ENCODE measurements at regions of chr1 and their contacts with region 1.

Region 1: DNA sequence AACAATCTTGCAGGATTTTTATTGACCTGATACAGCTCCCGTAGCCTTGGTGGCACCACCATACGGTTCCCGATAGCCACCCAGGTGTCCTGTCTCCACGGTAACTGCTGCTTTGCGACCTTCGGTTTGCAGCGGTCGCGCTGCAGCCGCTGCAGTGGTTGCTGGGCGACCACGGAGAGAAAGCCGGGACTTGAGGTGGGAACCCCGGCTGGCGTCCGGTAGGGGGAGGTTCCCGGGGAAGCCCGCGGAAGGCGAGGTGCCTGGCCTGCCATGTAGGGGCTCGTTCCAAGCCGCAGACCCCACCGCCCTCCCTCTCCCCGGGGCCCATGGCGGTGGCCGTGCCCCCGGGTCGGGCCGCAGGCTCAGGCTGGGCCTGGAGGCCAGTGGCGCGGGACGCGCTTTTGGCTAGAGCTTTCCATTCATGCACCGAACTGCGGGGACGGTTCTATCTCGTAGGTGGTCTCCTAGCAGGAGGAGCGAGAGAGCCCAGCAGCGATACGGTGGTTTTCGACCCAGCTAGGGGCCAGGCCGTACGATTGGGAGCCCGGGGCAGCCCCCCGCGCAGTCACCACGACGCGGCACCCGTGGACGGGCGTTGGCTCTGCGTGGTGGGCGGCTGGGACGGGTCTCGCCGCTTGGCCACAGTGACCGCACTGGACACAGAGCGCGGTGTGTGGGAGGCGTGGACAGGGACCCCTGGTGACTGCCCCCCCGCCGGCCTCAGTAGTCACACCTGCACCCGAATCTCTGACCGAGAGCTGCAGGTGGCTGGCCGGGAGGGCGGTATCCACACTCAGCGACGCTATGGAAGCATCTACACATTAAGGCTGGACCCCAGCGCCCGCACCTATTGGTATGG is at the start of gene KLHDC9:
- DNase-seq: peak; percentile 70 to 77
- ATAC-seq: peak; percentile 72 to 94 (median 84)
- H3K4me3 ChIP-seq: peak within 1 kb of the TSS; percentile 15 to 77 (median 60)
- H3K27ac ChIP-seq: peak within 1 kb of the TSS in 9 of 10 donors; percentile 39 to 74 (median 67)
- H3K4me1 ChIP-seq: peaks cover 7 to 43% (median 22%) of the 10 kb centered on the region in 9 donors
- H3K27me3 ChIP-seq: no peaks in the 10 kb centered on the region
- CTCF ChIP-seq: peak in 2 of 9 donors; percentile 4 to 8
- total RNA-seq, gene KLHDC9: 2.2 to 17.7 (median 9.0) TPM

Region 2: GRCh38 chr1:160726498-160727315 is 371.7 kb before region 1 on chr1:
- intact Hi-C with region 1: loop called in 1 of 10 experiments (anchors 5 kb)
- DNase-seq: peak in 1 of 2 donors; percentile 50
- ATAC-seq: peak in 7 of 8 donors; percentile 55 to 90 (median 72)
- H3K4me3 ChIP-seq: no peak overlapping the region
- H3K27ac ChIP-seq: peak overlapping the region in 1 of 10 donors; percentile 45
- H3K4me1 ChIP-seq: peaks cover 0 to 30% (median 0%) of the 10 kb centered on the region in 9 donors
- H3K27me3 ChIP-seq: peaks cover 0 to 14% (median 0%) of the 10 kb centered on the region in 7 donors
- CTCF ChIP-seq: peak; percentile 48 to 88 (median 73)

Region 3: GRCh38 chr1:160830321-160831153 is 267.9 kb before region 1 on chr1:
- intact Hi-C with region 1: loop called in 4 of 10 experiments (anchors 2 to 10 kb)
- DNase-seq: peak; percentile 21 to 39
- ATAC-seq: peak in 2 of 8 donors; percentile 27 to 31
- H3K4me3 ChIP-seq: no peak overlapping the region
- H3K27ac ChIP-seq: no peak overlapping the region
- H3K4me1 ChIP-seq: no peaks in the 10 kb centered on the region
- H3K27me3 ChIP-seq: peaks cover 0 to 20% (median 0%) of the 10 kb centered on the region in 7 donors
- CTCF ChIP-seq: peak in 7 of 9 donors; percentile 33 to 62 (median 53)

Region 4: DNA sequence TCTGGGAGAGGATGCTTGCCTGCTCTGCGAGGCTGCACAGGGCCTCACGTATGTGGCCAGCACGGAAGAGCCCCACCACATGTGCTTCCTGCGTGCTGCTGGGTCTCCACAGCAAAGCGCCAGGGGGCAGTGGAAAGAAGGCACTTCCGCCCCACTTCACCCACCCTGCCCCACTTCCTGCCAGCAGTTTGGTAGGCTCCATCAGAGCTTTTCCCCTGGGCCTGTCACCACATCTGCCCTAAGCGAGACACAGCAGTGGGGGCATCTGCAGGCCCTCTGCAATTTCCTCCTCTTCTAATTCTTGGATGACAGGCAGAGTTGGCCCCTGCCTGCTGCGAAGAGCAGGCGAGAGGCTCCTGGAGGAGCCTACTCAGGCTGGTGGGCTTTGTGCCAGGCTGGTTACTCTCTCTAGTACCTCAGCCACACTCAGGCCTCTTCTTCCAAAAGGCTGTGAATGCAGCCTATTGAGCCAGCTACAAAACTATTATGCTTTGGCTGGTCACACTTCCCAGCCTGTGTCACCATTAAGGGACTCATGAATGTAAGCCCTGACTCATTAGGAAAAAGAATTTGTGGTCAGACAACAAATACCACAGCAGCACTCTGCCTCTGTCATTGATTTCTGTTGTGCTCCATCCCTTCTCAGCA is 260.8 kb before region 1 on chr1:
- intact Hi-C with region 1: loop called in 4 of 10 experiments (anchors 2 to 10 kb)
- DNase-seq: peak in 1 of 2 donors; percentile 40
- ATAC-seq: peak in 7 of 8 donors; percentile 58 to 70 (median 64)
- H3K4me3 ChIP-seq: no peak overlapping the region
- H3K27ac ChIP-seq: peak overlapping the region in 2 of 10 donors; percentile 37 to 73
- H3K4me1 ChIP-seq: peaks cover 0 to 44% (median 3%) of the 10 kb centered on the region in 9 donors
- H3K27me3 ChIP-seq: peaks cover 0 to 14% (median 0%) of the 10 kb centered on the region in 7 donors
- CTCF ChIP-seq: peak in 3 of 9 donors; percentile 11 to 33 (median 13)

Region 5: DNA sequence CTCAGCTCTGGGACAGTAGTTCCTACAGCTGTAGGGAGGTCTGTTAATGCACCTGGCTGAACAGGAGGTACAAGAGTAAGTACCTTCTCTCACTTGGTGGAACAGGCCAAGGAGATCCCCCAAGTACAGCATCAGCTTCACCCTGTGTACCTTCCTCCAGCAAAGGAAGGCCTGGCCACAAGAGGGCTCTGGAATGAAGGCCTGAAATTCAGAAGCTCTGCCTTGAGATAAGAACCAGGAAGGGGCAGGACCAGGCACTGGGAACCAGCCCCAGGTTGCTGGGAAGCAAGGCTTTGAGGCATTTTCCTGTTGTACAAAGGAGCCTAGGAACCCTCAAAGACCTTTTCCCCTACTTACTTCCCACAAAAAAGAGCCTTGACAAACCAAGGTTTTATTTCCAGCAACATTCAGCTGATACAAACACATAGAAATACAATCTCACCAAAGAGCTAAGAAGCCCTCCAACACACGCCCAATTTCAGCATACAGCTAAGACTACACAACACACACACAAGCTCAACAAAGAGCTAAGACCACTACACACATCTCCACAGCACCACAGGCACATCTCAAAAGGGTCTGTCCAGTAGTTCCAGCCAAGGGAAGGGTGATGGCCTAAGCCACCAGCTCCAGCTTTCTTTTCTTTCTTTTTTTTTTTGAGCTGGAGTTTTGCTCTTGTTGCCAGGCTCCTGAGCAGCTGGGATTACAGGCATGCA is 101.0 kb before region 1 on chr1:
- intact Hi-C with region 1: loop called in 9 of 10 experiments (anchors 1 to 5 kb)
- DNase-seq: peak; percentile 45 to 83
- ATAC-seq: peak; percentile 89 to 95 (median 92)
- H3K4me3 ChIP-seq: no peak overlapping the region
- H3K27ac ChIP-seq: peak overlapping the region in 9 of 10 donors; percentile 47 to 82 (median 75)
- H3K4me1 ChIP-seq: peaks cover 0 to 30% (median 12%) of the 10 kb centered on the region in 9 donors
- H3K27me3 ChIP-seq: no peaks in the 10 kb centered on the region
- CTCF ChIP-seq: peak; percentile 43 to 83 (median 68)

Region 6: DNA sequence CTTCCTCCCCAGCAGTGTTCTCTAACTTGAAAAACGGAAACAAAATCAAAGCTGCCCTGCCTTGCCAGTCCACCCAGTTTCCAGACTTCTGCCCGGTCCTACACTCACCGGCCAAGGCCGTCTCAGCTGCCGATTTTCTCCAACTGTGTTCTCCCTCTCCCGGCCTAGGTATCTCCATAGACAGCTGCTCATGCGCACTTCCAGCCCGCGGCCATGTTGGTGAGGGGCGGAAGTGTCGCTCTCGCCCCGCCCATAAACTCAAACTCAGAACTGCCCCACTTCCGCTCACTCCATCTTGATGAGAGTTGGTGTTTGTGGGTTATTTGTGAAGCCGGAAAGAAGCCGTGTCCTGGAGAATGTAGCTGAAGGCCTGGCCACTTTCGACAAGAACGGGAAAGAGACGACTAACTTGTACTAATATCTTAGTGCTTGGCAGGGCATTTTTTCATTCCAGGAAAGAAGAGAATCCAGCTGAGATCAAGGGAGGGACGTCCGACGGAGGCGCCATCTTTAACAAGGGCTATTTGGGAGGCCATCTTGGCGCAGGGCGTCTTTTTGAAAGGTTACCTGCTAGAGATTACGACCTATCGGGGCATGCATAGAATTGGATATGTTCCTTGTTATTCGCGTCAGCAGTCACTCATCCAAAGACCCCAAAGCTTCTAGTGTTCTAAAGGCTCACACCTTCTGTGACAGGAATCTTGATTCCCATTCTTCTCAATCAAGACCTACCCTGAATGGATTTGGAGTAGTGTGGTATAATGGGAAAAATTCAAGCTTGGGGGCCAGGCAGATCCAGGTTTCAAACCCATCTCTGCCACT is 52.5 kb before region 1 on chr1 and contains the start of gene USF1:
- intact Hi-C with region 1: loop called in 4 of 10 experiments (anchors 2 to 5 kb)
- DNase-seq: peak; percentile 90 to 94
- ATAC-seq: peak; percentile 97 to 98 (median 98)
- H3K4me3 ChIP-seq: peak within 1 kb of the TSS; percentile 65 to 98 (median 86)
- H3K27ac ChIP-seq: peak within 1 kb of the TSS; percentile 86 to 98 (median 95)
- H3K4me1 ChIP-seq: peaks cover 0 to 53% (median 17%) of the 10 kb centered on the region in 9 donors
- H3K27me3 ChIP-seq: no peaks in the 10 kb centered on the region
- CTCF ChIP-seq: no peak
- total RNA-seq, gene USF1: 23.7 to 43.6 (median 28.5) TPM

Region 7: GRCh38 chr1:161132410-161133219 is 34.2 kb after region 1 on chr1 and contains the start of gene DEDD:
- intact Hi-C with region 1: loop called in 1 of 10 experiments (anchors 2 kb)
- DNase-seq: peak; percentile 90 to 97
- ATAC-seq: peak; percentile 95 to 97 (median 96)
- H3K4me3 ChIP-seq: peak within 1 kb of the TSS; percentile 55 to 85 (median 74)
- H3K27ac ChIP-seq: peak within 1 kb of the TSS; percentile 89 to 99 (median 96)
- H3K4me1 ChIP-seq: peaks cover 4 to 63% (median 45%) of the 10 kb centered on the region in 9 donors
- H3K27me3 ChIP-seq: no peaks in the 10 kb centered on the region
- CTCF ChIP-seq: peak in 2 of 9 donors; percentile 18 to 39
- total RNA-seq, gene DEDD: 21.7 to 33.0 (median 26.3) TPM

Region 8: GRCh38 chr1:161165742-161166668 is 67.6 kb after region 1 on chr1 and contains the start of gene PPOX:
- intact Hi-C with region 1: no loop called
- DNase-seq: peak; percentile 93 to 97
- ATAC-seq: peak; percentile 94 to 97 (median 96)
- H3K4me3 ChIP-seq: peak within 1 kb of the TSS; percentile 62 to 92 (median 78)
- H3K27ac ChIP-seq: peak within 1 kb of the TSS; percentile 86 to 94 (median 88)
- H3K4me1 ChIP-seq: peaks cover 10 to 41% (median 31%) of the 10 kb centered on the region in 9 donors
- H3K27me3 ChIP-seq: no peaks in the 10 kb centered on the region
- CTCF ChIP-seq: peak in 8 of 9 donors; percentile 6 to 62 (median 45)
- total RNA-seq, gene PPOX: 8.5 to 19.8 (median 15.0) TPM

Region 9: GRCh38 chr1:161201828-161202725 is 103.6 kb after region 1 on chr1 and contains the start of gene NDUFS2:
- intact Hi-C with region 1: no loop called
- DNase-seq: peak; percentile 95 to 99
- ATAC-seq: peak; percentile 79 to 91 (median 88)
- H3K4me3 ChIP-seq: peak within 1 kb of the TSS; percentile 72 to 94 (median 85)
- H3K27ac ChIP-seq: peak within 1 kb of the TSS; percentile 93 to 100 (median 98)
- H3K4me1 ChIP-seq: peaks cover 48 to 92% (median 85%) of the 10 kb centered on the region in 9 donors
- H3K27me3 ChIP-seq: no peaks in the 10 kb centered on the region
- CTCF ChIP-seq: peak in 2 of 9 donors; percentile 10 to 21
- total RNA-seq, gene NDUFS2: 244 to 370 (median 318) TPM

Region 10: DNA sequence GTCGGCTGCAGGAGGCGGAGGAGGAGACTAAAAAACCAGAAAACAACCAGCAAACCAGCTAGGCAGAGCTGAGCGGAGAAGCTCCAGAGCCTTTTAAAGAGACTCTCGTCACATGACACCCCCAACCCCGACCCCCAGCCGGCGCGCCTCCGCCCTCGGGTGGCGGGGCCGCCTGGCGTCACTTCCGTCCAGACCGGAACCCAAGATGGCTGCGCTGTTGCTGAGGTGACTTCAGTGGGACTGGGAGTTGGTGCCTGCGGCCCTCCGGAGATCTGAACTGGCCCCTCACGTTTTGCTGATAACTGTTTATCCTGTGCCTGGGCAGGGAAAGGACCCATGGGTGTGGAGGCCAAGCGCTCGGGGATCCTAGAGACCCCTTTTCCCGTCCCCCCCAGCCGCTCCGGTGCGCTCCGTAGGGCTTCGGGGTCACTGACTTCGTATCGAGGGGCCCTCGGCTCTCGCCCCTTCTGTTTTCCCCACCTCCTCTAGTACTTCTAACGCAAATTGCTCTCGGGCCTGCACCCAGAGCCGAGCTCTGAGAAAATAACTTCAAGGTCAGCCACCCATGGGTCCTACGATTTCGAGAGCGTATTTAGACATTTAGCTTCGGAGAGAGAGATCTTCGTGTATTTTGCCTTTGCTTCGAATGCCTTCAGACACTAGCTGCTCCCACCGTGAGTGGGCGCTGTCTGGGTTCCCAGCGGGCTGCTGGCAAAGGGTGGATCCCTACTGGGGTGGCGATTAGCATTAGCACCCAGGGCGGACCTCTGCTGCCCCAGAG is 216.0 kb after region 1 on chr1 and contains the start of gene SDHC:
- intact Hi-C with region 1: no loop called
- DNase-seq: peak; percentile 90 to 91
- ATAC-seq: peak; percentile 99 to 100 (median 99)
- H3K4me3 ChIP-seq: peak within 1 kb of the TSS; percentile 65 to 98 (median 88)
- H3K27ac ChIP-seq: peak within 1 kb of the TSS; percentile 82 to 99 (median 94)
- H3K4me1 ChIP-seq: peaks cover 3 to 29% (median 17%) of the 10 kb centered on the region in 9 donors
- H3K27me3 ChIP-seq: peaks cover 0 to 3% (median 0%) of the 10 kb centered on the region in 7 donors
- CTCF ChIP-seq: peak in 6 of 9 donors; percentile 11 to 45 (median 28)
- total RNA-seq, gene SDHC: 342 to 459 (median 420) TPM